Activated CD4-positive, alpha-beta T cell treated with anti-CD3 and anti-CD28 coated beads for 36 hours (primary cell): ENCODE measurements at regions of chr19 and their contacts with region 1.

Region 1: GRCh38 chr19:18007044-18007916 is 690 bp upstream of the ARRDC2 start:
- DNase-seq: peak; percentile 89
- ATAC-seq: peak; percentile 72
- H3K4me3 Mint-ChIP-seq: peak overlapping the region; percentile 73
- H3K27ac Mint-ChIP-seq: peak overlapping the region; percentile 81
- H3K4me1 Mint-ChIP-seq: peaks cover 31% of the 10 kb centered on the region
- H3K27me3 Mint-ChIP-seq: no peaks in the 10 kb centered on the region

Region 2: DNA sequence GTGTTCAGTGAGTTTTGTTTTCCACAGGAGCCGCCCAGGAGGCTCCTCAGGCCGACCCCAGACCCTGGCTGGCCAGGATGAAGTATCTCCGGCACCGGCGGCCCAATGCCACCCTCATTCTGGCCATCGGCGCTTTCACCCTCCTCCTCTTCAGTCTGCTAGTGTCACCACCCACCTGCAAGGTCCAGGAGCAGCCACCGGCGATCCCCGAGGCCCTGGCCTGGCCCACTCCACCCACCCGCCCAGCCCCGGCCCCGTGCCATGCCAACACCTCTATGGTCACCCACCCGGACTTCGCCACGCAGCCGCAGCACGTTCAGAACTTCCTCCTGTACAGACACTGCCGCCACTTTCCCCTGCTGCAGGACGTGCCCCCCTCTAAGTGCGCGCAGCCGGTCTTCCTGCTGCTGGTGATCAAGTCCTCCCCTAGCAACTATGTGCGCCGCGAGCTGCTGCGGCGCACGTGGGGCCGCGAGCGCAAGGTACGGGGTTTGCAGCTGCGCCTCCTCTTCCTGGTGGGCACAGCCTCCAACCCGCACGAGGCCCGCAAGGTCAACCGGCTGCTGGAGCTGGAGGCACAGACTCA is 199.5 kb before region 1 on chr19:
- CTCF ChIA-PET with region 1: no interaction called
- POLR2A ChIA-PET with region 1: no interaction called
- intact Hi-C with region 1: no loop called
- DNase-seq: peak; percentile 46
- ATAC-seq: no peak
- H3K4me3 Mint-ChIP-seq: no peak overlapping the region
- H3K27ac Mint-ChIP-seq: no peak overlapping the region
- H3K4me1 Mint-ChIP-seq: peaks cover 30% of the 10 kb centered on the region
- H3K27me3 Mint-ChIP-seq: no peaks in the 10 kb centered on the region

Region 3: DNA sequence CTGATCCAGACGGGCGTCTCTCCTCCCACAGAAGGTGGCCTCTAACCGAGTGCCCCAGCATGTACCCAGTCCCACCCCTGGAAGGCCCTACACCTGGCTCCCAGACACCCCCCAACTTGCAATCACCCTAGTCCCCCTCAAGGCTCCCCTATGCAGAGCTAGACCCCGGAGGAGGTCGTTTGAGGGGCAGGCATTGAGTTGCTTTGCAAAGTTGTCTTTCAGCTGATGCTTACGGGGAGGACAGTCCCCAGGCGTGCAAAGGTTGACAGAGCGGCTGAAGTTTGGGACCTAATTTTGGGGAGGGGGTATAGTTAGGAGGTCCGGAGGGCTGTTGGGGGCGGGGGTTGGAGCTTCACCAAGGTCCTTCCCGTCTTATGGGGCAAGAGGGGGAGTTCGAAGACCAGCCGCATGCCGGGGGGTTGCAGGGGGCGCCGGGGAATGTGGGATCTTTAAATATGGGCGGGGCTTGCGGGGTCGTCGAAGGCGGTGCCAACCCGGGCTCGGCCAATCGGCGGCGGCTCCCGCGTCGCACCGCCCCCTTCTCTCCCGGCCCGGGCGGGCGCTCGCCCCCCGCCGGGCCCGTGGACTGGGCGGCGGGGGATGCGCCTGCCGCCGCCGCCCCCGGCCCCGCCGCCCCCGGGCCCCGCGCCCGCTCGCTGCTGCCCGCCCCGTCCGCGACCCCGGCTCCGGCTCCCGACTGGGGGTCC is 40.6 kb before region 1 on chr19 and contains the start of gene KCNN1:
- CTCF ChIA-PET with region 1: no interaction called
- POLR2A ChIA-PET with region 1: no interaction called
- intact Hi-C with region 1: no loop called
- DNase-seq: no peak
- ATAC-seq: no peak
- H3K4me3 Mint-ChIP-seq: no peak within 1 kb of the TSS
- H3K27ac Mint-ChIP-seq: no peak within 1 kb of the TSS
- H3K4me1 Mint-ChIP-seq: peaks cover 3% of the 10 kb centered on the region
- H3K27me3 Mint-ChIP-seq: peaks cover 28% of the 10 kb centered on the region
- total RNA-seq, gene KCNN1: 0.05 TPM in 1 of 2 experiments, not detected in the other

Region 4: DNA sequence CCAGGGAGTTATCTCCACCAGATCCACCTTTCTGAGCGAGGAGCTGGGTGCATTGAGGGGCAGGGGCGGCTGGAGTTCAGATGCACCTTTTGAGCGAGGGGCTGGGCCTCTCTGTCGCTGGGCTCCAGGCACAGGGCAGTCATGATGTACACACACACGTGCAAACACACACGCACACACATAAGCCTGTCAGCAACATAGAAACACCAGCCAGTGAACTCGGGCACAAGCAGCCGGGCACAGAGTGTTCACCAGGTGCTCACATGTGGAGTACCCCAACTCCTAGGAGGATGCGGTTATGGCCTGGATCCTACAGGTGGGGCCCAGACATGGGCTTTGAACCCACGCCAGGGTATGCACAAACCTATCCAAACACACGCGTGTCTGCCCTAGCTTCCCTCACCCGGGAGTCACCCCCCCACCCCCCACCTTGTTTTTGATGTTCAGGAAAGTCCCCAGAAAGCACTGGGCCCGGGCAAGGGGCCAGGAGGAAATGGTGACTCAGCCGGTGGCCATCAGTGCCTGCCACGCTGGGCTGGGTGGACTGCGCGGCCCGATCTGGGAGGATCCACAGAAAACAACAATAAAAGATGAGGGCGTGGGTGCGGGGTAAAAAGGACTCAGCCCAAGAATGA is 14.0 kb after region 1 on chr19:
- CTCF ChIA-PET with region 1: interaction called, 8 read pairs
- POLR2A ChIA-PET with region 1: no interaction called
- intact Hi-C with region 1: loop called in 1 of 2 experiments (anchors 1 kb)
- DNase-seq: peak; percentile 80
- ATAC-seq: peak; percentile 31
- H3K4me3 Mint-ChIP-seq: peak overlapping the region; percentile 70
- H3K27ac Mint-ChIP-seq: peak overlapping the region; percentile 90
- H3K4me1 Mint-ChIP-seq: peaks cover 60% of the 10 kb centered on the region
- H3K27me3 Mint-ChIP-seq: no peaks in the 10 kb centered on the region

Region 5: DNA sequence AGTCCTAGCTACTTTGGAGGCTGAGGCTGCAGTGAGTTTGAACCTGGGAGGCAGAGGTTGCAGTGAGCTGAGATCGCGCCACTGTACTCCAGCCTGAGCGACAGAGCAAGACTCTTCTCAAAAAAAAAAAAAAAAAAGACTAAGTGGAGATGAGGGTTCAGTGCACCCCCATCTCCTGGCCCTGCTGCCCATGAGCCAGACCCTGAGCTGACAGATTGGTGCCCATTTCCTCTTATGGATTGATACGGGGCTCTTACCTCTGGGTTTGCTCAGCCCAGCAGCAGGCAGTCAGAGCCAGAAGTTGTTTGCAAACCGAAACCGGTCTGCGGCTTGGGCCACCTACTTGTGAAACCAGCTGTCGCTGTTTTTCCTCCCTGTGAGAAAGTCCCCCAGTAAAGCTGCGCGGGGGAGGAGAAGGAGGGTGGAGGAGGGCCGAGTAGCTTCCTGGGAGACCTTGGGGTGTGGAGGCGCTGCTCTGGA is 37.6 kb after region 1 on chr19:
- CTCF ChIA-PET with region 1: interaction called, 12 read pairs
- POLR2A ChIA-PET with region 1: no interaction called
- intact Hi-C with region 1: loop called in 1 of 2 experiments (anchors 1 kb)
- DNase-seq: peak; percentile 96
- ATAC-seq: peak; percentile 94
- H3K4me3 Mint-ChIP-seq: peak overlapping the region; percentile 11
- H3K27ac Mint-ChIP-seq: peak overlapping the region; percentile 16
- H3K4me1 Mint-ChIP-seq: peaks cover 34% of the 10 kb centered on the region
- H3K27me3 Mint-ChIP-seq: peaks cover 9% of the 10 kb centered on the region

Region 6: GRCh38 chr19:18058208-18059030 is 51.1 kb after region 1 on chr19:
- CTCF ChIA-PET with region 1: interaction called, 71 read pairs
- POLR2A ChIA-PET with region 1: no interaction called
- intact Hi-C with region 1: loop called (anchors 1 kb)
- DNase-seq: peak; percentile 91
- ATAC-seq: peak; percentile 92
- H3K4me3 Mint-ChIP-seq: no peak overlapping the region
- H3K27ac Mint-ChIP-seq: peak overlapping the region; percentile 74
- H3K4me1 Mint-ChIP-seq: peaks cover 9% of the 10 kb centered on the region
- H3K27me3 Mint-ChIP-seq: no peaks in the 10 kb centered on the region

Region 7: GRCh38 chr19:18167975-18168645 is 160.8 kb after region 1 on chr19:
- CTCF ChIA-PET with region 1: no interaction called
- POLR2A ChIA-PET with region 1: no interaction called
- intact Hi-C with region 1: loop called in 1 of 2 experiments (anchors 1 kb)
- DNase-seq: peak; percentile 81
- ATAC-seq: peak; percentile 95
- H3K4me3 Mint-ChIP-seq: no peak overlapping the region
- H3K27ac Mint-ChIP-seq: no peak overlapping the region
- H3K4me1 Mint-ChIP-seq: peaks cover 4% of the 10 kb centered on the region
- H3K27me3 Mint-ChIP-seq: no peaks in the 10 kb centered on the region

Region 8: DNA sequence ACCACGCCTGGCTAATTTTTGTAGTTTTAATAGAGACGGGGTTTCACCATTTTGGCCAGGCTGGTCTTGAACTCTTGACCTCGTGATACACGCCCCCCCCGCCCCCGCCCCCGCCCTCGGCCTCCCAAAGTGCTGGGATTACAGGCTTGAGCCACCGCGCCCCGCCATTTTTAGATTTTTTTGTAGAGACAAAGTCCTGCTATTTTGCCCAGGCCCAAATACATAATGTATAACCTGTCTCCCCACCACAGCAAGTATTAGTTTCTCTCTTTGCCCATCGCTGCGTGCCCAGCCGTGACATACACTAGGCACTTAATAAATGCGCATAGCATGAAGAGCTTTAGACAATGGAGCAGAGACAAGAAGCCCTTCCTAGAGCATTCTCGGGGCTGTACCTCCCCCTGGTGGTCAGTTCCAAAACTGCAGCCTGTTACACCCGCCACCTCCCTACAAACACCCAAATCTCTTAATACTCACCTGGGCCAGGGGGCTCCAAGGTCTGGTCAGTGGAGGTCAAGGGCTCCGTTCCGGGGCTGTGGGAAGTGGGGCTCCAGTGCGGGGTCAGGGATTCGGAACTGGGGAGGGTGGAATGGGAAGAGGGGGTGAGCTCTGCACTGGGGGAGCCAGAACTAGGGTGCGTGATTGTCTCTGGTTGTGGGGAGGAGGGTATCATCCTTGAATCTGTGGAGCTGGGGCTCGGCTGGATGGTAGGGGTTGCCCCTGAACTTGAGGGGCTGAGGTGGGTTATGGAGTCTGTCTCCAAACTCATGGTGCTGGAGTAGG is 244.5 kb after region 1 on chr19:
- CTCF ChIA-PET with region 1: no interaction called
- POLR2A ChIA-PET with region 1: no interaction called
- intact Hi-C with region 1: loop called (anchors 2 to 5 kb)
- DNase-seq: peak; percentile 89
- ATAC-seq: peak; percentile 95
- H3K4me3 Mint-ChIP-seq: no peak overlapping the region
- H3K27ac Mint-ChIP-seq: no peak overlapping the region
- H3K4me1 Mint-ChIP-seq: no peaks in the 10 kb centered on the region
- H3K27me3 Mint-ChIP-seq: peaks cover 21% of the 10 kb centered on the region

Region 9: GRCh38 chr19:18478569-18479311 is 471.5 kb after region 1 on chr19:
- CTCF ChIA-PET with region 1: no interaction called
- POLR2A ChIA-PET with region 1: no interaction called
- intact Hi-C with region 1: no loop called
- DNase-seq: peak; percentile 89
- ATAC-seq: peak; percentile 92
- H3K4me3 Mint-ChIP-seq: peak overlapping the region; percentile 59
- H3K27ac Mint-ChIP-seq: peak overlapping the region; percentile 95
- H3K4me1 Mint-ChIP-seq: peaks cover 80% of the 10 kb centered on the region
- H3K27me3 Mint-ChIP-seq: no peaks in the 10 kb centered on the region